PC-3 (cell line): ENCODE measurements at regions of chr20 and their contacts with region 1.

Region 1: DNA sequence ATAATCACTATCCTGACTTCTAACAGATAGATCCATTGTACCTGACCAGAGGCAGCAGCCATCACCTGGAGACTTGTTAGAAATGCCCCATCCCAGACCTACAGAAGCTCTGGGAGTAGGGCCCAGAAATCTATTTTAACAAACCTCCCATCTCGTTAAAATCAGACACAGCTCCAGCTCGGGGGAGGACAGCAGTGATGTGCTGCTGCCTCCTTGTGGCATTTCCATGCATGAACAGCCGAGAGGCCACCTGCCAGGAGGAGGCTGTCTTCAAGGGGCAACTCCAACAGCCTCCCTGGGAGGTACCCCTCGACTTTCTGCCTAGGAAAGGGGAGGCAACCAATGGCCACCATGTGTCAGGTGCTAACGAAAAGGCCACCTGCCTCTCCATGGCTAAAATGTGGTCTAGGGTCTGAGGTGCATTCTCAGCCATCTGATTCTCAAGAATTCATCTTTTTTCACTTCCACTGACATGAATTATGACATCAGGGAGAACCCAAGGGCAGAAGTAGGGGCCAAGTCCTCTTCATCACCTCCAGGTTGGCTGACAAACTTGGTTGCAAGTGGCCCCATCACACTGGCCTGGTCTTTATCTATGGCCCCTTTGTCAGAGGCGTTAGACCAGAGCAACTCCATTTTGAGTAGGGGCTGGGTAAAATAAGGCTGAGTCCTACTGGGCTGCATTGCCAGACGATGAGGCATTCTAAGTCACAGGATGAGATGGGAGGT is 12.2 kb upstream of the KCNK15 start:
- DNase-seq: peak; percentile 90
- ATAC-seq: peak; percentile 11
- H3K4me3 ChIP-seq: no peak overlapping the region
- H3K27ac ChIP-seq: no peak overlapping the region
- H3K4me1 ChIP-seq: peaks cover 42% of the 10 kb centered on the region
- H3K27me3 ChIP-seq: no peaks in the 10 kb centered on the region
- CTCF ChIP-seq: peak; percentile 96

Region 2: GRCh38 chr20:44210422-44211176 is 522.9 kb before region 1 on chr20 and contains the start of gene OSER1:
- CTCF ChIA-PET with region 1: no interaction called
- POLR2A ChIA-PET with region 1: no interaction called
- intact Hi-C with region 1: loop called (anchors 5 kb)
- DNase-seq: peak; percentile 99
- ATAC-seq: peak; percentile 80
- H3K4me3 ChIP-seq: peak within 1 kb of the TSS; percentile 87
- H3K27ac ChIP-seq: peak within 1 kb of the TSS; percentile 77
- H3K4me1 ChIP-seq: peaks cover 48% of the 10 kb centered on the region
- H3K27me3 ChIP-seq: no peaks in the 10 kb centered on the region
- CTCF ChIP-seq: no peak
- total RNA-seq, gene OSER1: 29.0 and 34.8 TPM in 2 replicates

Region 3: DNA sequence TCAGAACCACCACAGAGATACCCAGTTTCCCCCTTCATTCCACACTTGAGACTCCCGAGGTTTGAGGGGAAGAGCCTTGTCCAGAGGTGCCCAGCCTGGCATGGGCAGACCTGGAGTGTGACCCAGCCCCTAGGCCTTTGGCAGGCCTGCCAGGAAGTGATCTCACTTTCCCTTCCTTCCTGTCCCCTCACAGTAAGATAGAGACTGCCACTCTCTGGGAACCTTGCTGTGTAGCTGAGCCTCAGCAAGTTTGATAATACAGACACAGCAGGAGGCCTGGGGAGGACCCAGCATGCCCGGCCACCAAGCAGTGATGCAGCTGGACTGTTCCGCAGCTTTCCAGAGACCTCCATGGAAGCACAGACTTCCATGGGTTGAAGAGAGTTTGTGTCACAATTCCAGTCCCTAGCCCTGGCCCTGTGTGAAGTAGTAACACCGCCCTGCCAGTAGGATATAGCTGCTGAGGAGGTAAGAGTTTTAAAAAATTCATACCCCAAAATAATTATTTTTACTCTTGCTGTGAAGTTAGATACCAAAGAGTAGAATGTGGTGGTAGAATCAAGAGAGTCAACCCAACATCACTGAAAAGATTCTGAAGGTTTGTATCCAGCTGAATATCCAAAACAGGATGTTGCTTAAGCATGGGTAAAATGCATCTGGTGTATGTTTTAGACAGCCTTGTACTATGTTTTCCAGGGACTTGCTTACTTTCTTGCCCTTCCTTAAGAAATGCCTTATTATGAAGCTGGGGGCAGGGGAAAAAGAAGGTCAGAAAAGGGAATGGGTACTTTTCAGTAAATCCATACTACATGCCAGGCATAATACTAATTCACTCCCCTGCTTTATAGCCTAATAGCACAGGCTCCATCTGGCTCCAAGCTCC is 134.8 kb before region 1 on chr20:
- CTCF ChIA-PET with region 1: no interaction called
- POLR2A ChIA-PET with region 1: no interaction called
- intact Hi-C with region 1: no loop called
- DNase-seq: peak; percentile 26
- ATAC-seq: peak; percentile 47; the same call in 1 of the 2 replicates
- H3K4me3 ChIP-seq: no peak overlapping the region
- H3K27ac ChIP-seq: peak overlapping the region; percentile 16; the same call in 1 of the 2 replicates
- H3K4me1 ChIP-seq: peaks cover 50% of the 10 kb centered on the region
- H3K27me3 ChIP-seq: no peaks in the 10 kb centered on the region
- CTCF ChIP-seq: peak; percentile 33; the same call in 1 of the 2 replicates

Region 4: GRCh38 chr20:44683263-44684046 is 50.0 kb before region 1 on chr20:
- CTCF ChIA-PET with region 1: interaction called, 17 read pairs
- POLR2A ChIA-PET with region 1: no interaction called
- intact Hi-C with region 1: loop called (anchors 1 kb)
- DNase-seq: peak; percentile 87
- ATAC-seq: peak; percentile 85
- H3K4me3 ChIP-seq: no peak overlapping the region
- H3K27ac ChIP-seq: no peak overlapping the region
- H3K4me1 ChIP-seq: peaks cover 10% of the 10 kb centered on the region
- H3K27me3 ChIP-seq: no peaks in the 10 kb centered on the region
- CTCF ChIP-seq: peak; percentile 89

Region 5: GRCh38 chr20:44692932-44693476 is 40.5 kb before region 1 on chr20:
- CTCF ChIA-PET with region 1: interaction called, 4 read pairs
- POLR2A ChIA-PET with region 1: no interaction called
- intact Hi-C with region 1: loop called (anchors 1 kb)
- DNase-seq: peak; percentile 97
- ATAC-seq: peak; percentile 94
- H3K4me3 ChIP-seq: no peak overlapping the region
- H3K27ac ChIP-seq: peak overlapping the region; percentile 42
- H3K4me1 ChIP-seq: peaks cover 18% of the 10 kb centered on the region
- H3K27me3 ChIP-seq: no peaks in the 10 kb centered on the region
- CTCF ChIP-seq: no peak

Region 6: DNA sequence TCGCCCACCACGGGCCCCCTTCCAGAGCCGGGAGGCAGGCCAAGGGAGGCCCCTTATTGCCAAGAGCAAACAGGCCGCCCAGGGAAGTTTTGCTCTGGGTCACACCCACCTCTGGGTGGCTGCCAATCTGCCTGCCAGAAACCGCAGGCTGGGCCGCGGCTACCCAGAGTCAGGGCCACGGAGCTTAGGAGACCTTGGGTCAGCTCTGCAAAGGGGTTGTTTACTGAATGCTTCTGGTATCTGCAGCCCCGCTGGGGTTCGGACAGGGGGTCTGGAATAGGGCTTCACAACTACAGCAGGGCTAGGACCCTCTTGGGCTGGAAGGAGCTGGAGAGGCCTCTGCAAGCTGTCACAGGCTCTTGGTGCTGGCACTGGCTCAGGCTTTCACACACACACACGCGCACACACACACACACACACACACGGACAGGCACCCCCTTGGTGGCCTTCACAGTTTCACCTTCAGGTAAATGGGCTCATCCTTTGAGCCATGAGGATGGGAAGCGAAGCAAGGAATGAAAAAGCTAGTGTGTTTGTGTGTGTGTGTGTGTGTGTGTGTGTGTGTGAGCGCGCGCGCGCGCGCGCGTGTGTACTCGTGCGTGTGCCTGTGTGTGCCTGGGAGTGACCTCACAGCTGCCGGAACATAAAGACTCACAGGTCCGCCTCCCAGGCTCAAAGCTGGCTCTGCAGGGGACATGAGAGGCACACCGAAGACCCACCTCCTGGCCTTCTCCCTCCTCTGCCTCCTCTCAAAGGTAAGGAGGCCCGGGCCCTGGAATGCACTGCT is 18.6 kb before region 1 on chr20 and contains the start of gene CCN5:
- CTCF ChIA-PET with region 1: no interaction called
- POLR2A ChIA-PET with region 1: interaction called, 3 read pairs
- intact Hi-C with region 1: loop called (anchors 2 kb)
- DNase-seq: peak; percentile 89
- ATAC-seq: peak; percentile 93
- H3K4me3 ChIP-seq: no peak within 1 kb of the TSS
- H3K27ac ChIP-seq: no peak within 1 kb of the TSS
- H3K4me1 ChIP-seq: peaks cover 16% of the 10 kb centered on the region
- H3K27me3 ChIP-seq: no peaks in the 10 kb centered on the region
- CTCF ChIP-seq: no peak
- total RNA-seq, gene CCN5: 0.26 TPM in 1 of 2 replicates, not detected in the other